ENCODE measurements at regions of chr16 and their contacts with region 1.

Region 1: DNA sequence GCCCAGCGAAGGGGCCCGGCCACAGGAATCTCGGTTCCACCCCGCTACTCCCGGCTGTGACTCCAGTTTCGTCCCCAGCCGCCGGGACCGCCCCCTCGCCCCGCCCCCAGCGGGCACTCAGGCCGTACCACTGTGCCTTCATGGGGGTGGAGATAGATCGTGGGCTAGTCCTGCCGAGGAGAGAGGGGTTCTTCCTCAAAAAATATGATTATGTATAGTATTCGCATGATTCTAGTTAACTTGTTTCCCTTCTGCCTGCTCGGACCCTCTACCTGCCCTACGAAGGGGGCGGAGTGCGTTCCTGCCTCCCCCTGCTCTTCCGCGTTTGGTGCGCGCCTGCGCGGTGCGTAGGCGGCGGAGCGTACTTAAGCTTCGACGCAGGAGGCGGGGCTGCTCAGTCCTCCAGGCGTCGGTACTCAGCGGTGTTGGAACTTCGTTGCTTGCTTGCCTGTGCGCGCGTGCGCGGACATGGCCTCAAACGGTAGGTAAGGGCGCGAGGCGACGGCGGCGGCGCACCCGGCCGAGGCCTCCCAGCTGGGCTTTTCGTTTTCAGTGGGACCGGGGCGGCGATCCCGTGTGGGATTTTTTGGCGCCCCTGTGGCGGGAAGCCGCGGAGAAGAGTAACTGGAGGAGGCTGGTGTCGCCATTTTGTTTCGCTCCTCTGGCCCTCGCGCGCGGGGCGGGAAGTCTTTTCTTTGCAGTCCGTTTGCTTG is at the start of gene FUS:
- DNase-seq: peak; percentile 50
- ATAC-seq: peak; percentile 78
- H3K4me3 ChIP-seq: peak within 1 kb of the TSS; percentile 87
- H3K27ac ChIP-seq: peak within 1 kb of the TSS; percentile 98
- H3K4me1 ChIP-seq: peaks cover 22% of the 10 kb centered on the region
- H3K27me3 ChIP-seq: no peaks in the 10 kb centered on the region
- CTCF ChIP-seq: no peak
- EP300 ChIP-seq: no peak
- POLR2A ChIP-seq: peak; percentile 91
- RAD21 ChIP-seq: no peak
- polyA plus RNA-seq, gene FUS: 46.8 to 131 TPM

Region 2: DNA sequence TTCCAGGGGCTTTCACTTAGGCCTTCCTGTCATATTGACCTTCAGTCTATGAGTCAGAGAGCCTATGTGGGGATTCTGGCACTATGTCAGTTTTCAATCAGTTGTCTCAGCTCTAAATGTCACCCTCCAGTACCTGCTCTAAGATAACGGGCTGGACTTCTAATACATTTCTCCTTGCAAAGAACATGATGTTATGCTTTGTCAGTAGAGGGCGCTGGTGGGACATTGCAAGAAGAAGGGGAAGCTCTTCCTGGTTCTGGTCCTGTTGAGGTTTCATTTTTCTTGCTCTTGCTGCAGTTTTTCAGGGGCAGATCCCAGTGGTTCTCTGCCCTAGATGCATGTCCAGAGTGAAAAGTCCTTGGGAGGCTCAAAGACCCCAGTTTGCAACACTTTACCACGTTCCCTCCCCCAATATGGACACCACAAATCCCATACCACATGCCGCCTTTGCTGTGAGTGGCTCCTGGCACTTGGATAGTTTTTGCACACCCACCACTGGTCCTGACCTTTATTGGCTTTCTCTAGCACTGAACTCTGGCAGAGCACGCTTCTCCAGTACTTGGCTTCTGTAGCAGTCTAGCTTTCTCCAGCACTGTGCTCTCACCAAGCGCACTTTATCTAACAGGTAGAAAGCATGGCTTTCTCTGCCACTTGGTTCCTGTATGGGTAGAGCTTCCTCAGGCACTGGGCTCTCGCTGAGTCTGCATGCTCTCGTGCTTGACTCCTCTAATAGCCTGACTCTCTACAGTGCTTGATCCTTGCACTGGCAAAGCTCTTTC is 335.0 kb before region 1 on chr16:
- CTCF ChIA-PET with region 1: no interaction called
- POLR2A ChIA-PET with region 1: no interaction called
- RAD21 ChIA-PET with region 1: no interaction called
- SMC1A ChIA-PET with region 1: no interaction called
- in situ Hi-C with region 1: no loop called
- intact Hi-C with region 1: no loop called
- DNase-seq: peak; percentile 61
- ATAC-seq: peak; percentile 97
- H3K4me3 ChIP-seq: no peak overlapping the region
- H3K27ac ChIP-seq: no peak overlapping the region
- H3K4me1 ChIP-seq: peaks cover 5% of the 10 kb centered on the region
- H3K27me3 ChIP-seq: no peaks in the 10 kb centered on the region
- CTCF ChIP-seq: peak; percentile 89 to 95 (median 93); a peak in 5 of 6 replicates
- EP300 ChIP-seq: no peak
- POLR2A ChIP-seq: no peak
- RAD21 ChIP-seq: peak; percentile 99

Region 3: GRCh38 chr16:30997000-30997886 is 182.7 kb before region 1 on chr16:
- CTCF ChIA-PET with region 1: no interaction called
- POLR2A ChIA-PET with region 1: no interaction called
- RAD21 ChIA-PET with region 1: no interaction called
- SMC1A ChIA-PET with region 1: interaction called, 3 read pairs
- in situ Hi-C with region 1: no loop called
- intact Hi-C with region 1: loop called (anchors 5 kb)
- DNase-seq: peak; percentile 51
- ATAC-seq: peak; percentile 90
- H3K4me3 ChIP-seq: peak overlapping the region; percentile 97
- H3K27ac ChIP-seq: peak overlapping the region; percentile 82
- H3K4me1 ChIP-seq: peaks cover 17% of the 10 kb centered on the region
- H3K27me3 ChIP-seq: no peaks in the 10 kb centered on the region; a peak in 1 of 4 replicates
- CTCF ChIP-seq: no peak
- EP300 ChIP-seq: no peak
- POLR2A ChIP-seq: peak; percentile 85
- RAD21 ChIP-seq: no peak

Region 4: DNA sequence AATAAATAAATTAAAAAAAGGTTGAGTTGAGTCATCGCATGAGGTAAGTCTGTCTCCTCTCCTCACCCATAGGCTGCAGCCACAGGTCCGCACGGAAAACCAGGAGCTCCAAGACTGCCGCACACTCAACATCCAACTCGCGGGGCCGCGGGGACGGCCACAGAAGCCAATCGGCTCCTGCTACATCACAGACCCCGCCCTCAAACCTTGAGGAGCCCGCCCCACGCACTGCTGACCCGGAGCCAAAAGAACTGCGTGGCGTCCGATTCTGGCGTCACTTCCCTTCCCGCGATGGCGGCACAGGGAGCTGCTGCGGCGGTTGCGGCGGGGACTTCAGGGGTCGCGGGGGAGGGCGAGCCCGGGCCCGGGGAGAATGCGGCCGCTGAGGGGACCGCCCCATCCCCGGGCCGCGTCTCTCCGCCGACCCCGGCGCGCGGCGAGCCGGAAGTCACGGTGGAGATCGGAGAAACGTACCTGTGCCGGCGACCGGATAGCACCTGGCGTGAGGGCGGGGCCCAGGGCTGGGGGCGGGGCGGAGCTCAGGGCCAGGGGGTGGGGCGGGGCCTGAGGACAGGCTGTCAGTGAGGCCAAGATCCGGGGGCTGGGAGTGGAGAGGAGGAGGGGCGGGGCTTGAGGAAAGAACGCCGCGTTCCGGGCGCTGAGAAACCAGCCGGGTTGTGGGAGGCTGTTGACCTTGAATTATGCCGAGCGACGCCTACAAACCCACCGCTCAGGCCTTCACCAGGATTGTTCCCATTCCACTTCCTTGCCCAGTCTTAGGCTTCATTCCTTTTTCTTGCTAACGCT is 62.3 kb before region 1 on chr16 and contains the start of gene KAT8:
- CTCF ChIA-PET with region 1: no interaction called
- POLR2A ChIA-PET with region 1: interaction called, 10 read pairs
- RAD21 ChIA-PET with region 1: interaction called, 4 read pairs
- SMC1A ChIA-PET with region 1: no interaction called
- in situ Hi-C with region 1: no loop called
- intact Hi-C with region 1: no loop called
- DNase-seq: peak; percentile 72
- ATAC-seq: peak; percentile 96
- H3K4me3 ChIP-seq: peak within 1 kb of the TSS; percentile 84
- H3K27ac ChIP-seq: peak within 1 kb of the TSS; percentile 73
- H3K4me1 ChIP-seq: peaks cover 8% of the 10 kb centered on the region
- H3K27me3 ChIP-seq: no peaks in the 10 kb centered on the region
- CTCF ChIP-seq: no peak
- EP300 ChIP-seq: no peak
- POLR2A ChIP-seq: peak; percentile 96
- RAD21 ChIP-seq: no peak
- polyA plus RNA-seq, gene KAT8: 5.5 to 11.2 TPM

Region 5: GRCh38 chr16:31157136-31157535 is 22.8 kb before region 1 on chr16:
- CTCF ChIA-PET with region 1: interaction called, 6 read pairs
- POLR2A ChIA-PET with region 1: interaction called, 10 read pairs
- RAD21 ChIA-PET with region 1: no interaction called
- SMC1A ChIA-PET with region 1: interaction called, 4 read pairs
- in situ Hi-C with region 1: no loop called
- intact Hi-C with region 1: no loop called
- DNase-seq: no peak
- ATAC-seq: peak; percentile 73
- H3K4me3 ChIP-seq: no peak overlapping the region
- H3K27ac ChIP-seq: no peak overlapping the region
- H3K4me1 ChIP-seq: no peaks in the 10 kb centered on the region
- H3K27me3 ChIP-seq: no peaks in the 10 kb centered on the region
- CTCF ChIP-seq: no peak
- EP300 ChIP-seq: no peak
- POLR2A ChIP-seq: no peak
- RAD21 ChIP-seq: no peak

Region 6: DNA sequence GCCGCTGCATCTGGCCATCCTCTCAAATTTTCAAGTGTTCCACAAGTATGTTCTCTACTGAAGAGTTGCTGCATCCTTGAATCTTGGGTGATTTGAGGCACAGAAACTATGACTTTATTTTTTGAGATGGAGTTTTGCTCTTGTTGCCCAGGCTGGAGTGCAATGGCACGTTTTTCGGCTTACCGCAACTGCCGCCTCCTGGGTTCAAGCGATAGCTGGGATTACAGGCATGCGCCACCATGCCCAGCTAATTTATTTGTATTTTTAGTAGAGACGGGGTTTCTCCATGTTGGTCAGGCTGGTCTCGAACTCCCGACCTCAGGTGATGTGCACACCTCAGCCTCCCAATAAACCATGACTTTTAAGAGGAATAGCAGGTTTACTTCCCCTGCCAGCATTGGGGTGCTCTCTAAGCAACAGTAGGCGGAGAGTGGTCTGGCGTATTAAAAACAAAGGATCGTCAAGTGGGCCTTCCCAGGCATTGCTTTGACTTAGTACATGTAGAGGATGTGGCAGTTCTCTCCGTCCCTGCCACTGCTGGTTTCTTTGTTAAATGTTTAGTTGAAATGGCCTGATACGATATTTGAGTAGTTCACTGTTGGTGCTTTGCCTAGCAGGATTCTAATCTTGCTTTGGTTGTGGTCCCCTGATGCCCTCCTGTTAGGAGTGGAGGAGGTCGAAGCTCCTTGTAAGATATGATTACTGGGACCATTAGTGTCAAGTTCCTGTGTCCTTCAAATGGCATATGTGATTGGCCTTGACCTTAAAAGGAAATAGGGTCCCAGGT is 13.1 kb after region 1 on chr16:
- CTCF ChIA-PET with region 1: interaction called, 3 read pairs
- POLR2A ChIA-PET with region 1: interaction called, 12 read pairs
- RAD21 ChIA-PET with region 1: interaction called, 3 read pairs
- SMC1A ChIA-PET with region 1: interaction called, 3 read pairs
- in situ Hi-C with region 1: no loop called
- intact Hi-C with region 1: no loop called
- DNase-seq: no peak
- ATAC-seq: no peak
- H3K4me3 ChIP-seq: no peak overlapping the region
- H3K27ac ChIP-seq: no peak overlapping the region
- H3K4me1 ChIP-seq: peaks cover 4% of the 10 kb centered on the region
- H3K27me3 ChIP-seq: no peaks in the 10 kb centered on the region
- CTCF ChIP-seq: no peak
- EP300 ChIP-seq: no peak
- POLR2A ChIP-seq: no peak
- RAD21 ChIP-seq: no peak